ENCODE measurements at regions of chr9 and their contacts with region 1.

Region 1: GRCh38 chr9:97900738-97901565 is 21.3 kb downstream of the TRMO start:
- DNase-seq: no peak
- ATAC-seq: peak; percentile 44

Region 2: GRCh38 chr9:97705354-97705950 is 195.5 kb before region 1 on chr9:
- intact Hi-C with region 1: loop called in 1 of 2 experiments (anchors 5 kb)
- DNase-seq: no peak
- ATAC-seq: no peak

Measured in left colon (tissue), 2 donors.